T-cell (primary cell): ENCODE measurements at regions of chr1 and their contacts with region 1.

Region 1: DNA sequence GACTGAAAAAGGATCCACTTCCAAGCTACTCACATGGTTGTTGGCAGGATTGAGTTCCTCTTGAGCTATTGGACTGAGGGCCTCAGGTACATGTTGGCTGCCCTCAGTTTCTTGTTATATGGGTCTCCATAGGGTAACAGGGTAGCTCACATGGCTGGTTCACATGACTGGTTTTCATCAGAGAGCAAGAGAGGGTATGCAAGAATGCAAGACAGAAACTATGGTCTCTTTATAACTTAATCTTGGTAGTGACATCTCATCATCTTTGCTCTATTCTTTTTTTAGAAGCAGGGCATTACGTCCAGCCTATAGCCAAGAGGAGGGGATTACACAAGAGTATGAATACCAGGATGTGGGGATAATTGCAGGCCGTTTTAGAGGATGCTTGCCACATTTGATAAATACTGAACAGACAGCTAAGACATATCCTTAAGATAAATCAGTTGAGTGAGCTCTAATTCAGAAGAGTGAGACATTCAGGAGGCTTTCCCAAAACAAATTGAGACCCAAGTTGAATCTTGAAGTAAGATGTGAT is 100.2 kb downstream of the HMCN1 start:
- DNase-seq: no peak
- ATAC-seq: no peak
- H3K4me3 ChIP-seq: no peak overlapping the region
- H3K4me3 Mint-ChIP-seq: no peak overlapping the region
- H3K27ac ChIP-seq: no peak overlapping the region
- H3K27ac Mint-ChIP-seq: no peak overlapping the region
- H3K4me1 ChIP-seq: no peaks in the 10 kb centered on the region
- H3K4me1 Mint-ChIP-seq: no peaks in the 10 kb centered on the region
- H3K27me3 ChIP-seq: peaks cover 0 to 5% of the 10 kb centered on the region in 2 experiments
- H3K27me3 Mint-ChIP-seq: peaks cover 9 to 11% of the 10 kb centered on the region in 2 donors

Region 2: GRCh38 chr1:185850366-185850765 is 15.9 kb after region 1 on chr1:
- CTCF ChIA-PET with region 1: no interaction called
- POLR2A ChIA-PET with region 1: no interaction called
- DNase-seq: no peak
- ATAC-seq: no peak
- H3K4me3 ChIP-seq: no peak overlapping the region
- H3K4me3 Mint-ChIP-seq: no peak overlapping the region
- H3K27ac ChIP-seq: no peak overlapping the region
- H3K27ac Mint-ChIP-seq: no peak overlapping the region
- H3K4me1 ChIP-seq: no peaks in the 10 kb centered on the region
- H3K4me1 Mint-ChIP-seq: no peaks in the 10 kb centered on the region
- H3K27me3 ChIP-seq: no peaks in the 10 kb centered on the region
- H3K27me3 Mint-ChIP-seq: peaks cover 0 to 9% of the 10 kb centered on the region in 2 donors

Region 3: GRCh38 chr1:187092104-187092503 is 1257.7 kb after region 1 on chr1:
- CTCF ChIA-PET with region 1: interaction called in 1 of 2 experiments, 13 read pairs
- POLR2A ChIA-PET with region 1: no interaction called
- DNase-seq: peak in 15 of 35 experiments; percentile 3 to 53 (median 13)
- ATAC-seq: peak; percentile 45 to 97 (median 88)
- H3K4me3 ChIP-seq: no peak overlapping the region
- H3K4me3 Mint-ChIP-seq: peak overlapping the region; percentile 0 to 49 (median 2)
- H3K27ac ChIP-seq: no peak overlapping the region
- H3K27ac Mint-ChIP-seq: peak overlapping the region; percentile 82 to 83
- H3K4me1 ChIP-seq: peaks cover 0 to 7% of the 10 kb centered on the region in 2 experiments
- H3K4me1 Mint-ChIP-seq: peaks cover 20 to 27% (median 21%) of the 10 kb centered on the region in 3 donors
- H3K27me3 ChIP-seq: no peaks in the 10 kb centered on the region
- H3K27me3 Mint-ChIP-seq: peaks cover 0 to 2% of the 10 kb centered on the region in 2 donors